ENCODE measurements at regions of chr3 and their contacts with region 1.

Region 1: DNA sequence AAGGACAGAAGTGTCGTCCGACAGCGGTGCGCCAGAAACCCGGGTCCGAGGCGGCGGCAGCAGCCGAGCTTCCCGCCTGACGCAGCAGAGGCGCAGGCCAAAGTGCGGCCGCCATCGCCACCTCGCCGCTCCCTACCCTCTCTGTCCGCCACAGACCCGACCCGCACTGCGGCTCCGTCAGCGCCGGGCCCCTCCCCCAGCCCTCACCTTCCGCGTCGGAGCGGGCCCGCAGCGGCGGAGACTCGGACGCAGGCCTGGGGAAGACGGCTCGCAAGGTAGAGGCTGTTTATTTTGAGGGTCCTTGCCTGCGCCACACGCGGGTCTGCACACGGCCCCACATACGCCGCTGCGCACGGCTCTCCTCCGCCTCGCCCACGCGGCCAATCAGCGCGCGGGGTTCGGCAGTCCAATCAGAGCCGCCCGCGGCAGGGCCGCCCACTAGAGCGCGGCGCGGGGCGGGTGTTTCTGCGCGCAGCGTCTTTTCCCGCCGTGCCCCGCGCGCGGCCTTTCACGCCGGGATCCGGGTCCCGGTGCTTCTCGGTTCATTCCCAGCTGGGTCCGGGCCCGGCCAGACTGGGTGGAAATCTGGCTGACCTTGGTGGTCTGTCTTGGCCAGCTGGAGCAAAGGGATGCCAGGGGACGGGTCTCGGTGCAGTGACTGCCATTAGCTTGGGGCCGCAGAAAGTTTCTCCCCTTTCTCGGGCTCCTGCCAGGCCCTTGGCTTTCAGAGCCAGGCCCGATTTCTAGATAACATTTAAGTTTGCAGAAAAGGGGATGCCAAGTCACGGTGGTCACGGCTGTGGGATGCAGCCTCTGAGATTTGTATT is at the start of gene CNBP:
- DNase-seq: peak; percentile 79 to 91 (median 85)
- H3K4me3 ChIP-seq: peak within 1 kb of the TSS; percentile 80 to 96 (median 94)
- H3K4me3 Mint-ChIP-seq: peak within 1 kb of the TSS; percentile 95 to 98
- H3K27ac ChIP-seq: peak within 1 kb of the TSS; percentile 90 to 93
- H3K27ac Mint-ChIP-seq: peak within 1 kb of the TSS; percentile 91 to 99 (median 94)
- H3K4me1 ChIP-seq: peaks cover 61 to 83% of the 10 kb centered on the region in 2 donors
- H3K4me1 Mint-ChIP-seq: peaks cover 57% of the 10 kb centered on the region
- H3K27me3 ChIP-seq: no peaks in the 10 kb centered on the region
- H3K27me3 Mint-ChIP-seq: no peaks in the 10 kb centered on the region
- CTCF ChIP-seq: no peak
- polyA plus RNA-seq, gene CNBP: 354 to 946 (median 845) TPM

Region 2: DNA sequence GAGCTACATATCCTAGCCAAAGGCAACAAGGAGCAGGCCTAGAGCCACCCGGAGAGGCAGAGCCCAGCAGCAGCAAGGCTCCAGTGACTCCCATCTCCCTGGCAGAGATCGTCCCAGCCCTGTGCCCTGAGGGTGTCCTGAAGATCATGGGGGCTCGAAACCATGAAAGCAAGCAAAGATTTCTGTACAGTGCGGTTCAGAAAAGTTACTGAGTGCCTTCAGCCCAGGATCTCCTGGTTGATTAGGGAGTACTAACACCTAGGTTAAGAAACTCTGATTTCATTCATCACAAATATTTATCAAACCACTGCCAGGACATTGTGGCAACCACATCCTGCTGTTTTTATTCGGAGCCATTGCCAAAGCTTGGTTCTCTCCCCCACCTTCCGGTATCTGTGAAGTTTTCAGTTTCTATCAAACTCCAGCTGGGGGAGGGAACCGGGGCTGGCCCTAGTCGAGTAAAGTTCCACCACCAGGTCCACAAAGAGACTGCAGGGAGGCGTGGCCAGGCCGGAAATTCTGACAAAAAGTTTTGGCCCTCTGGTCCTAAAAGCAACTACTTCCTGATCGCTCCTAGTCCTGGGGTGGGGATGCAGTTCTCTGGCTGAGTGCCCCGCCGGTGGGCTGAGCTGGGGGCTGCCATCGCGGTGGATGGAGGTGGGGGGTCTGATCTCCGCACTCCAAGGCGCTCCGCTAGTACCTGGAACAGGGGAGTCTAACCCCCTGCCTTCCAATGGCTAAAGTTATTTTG is 63.4 kb before region 1 on chr3:
- intact Hi-C with region 1: no loop called
- DNase-seq: peak; percentile 89 to 94 (median 92)
- H3K4me3 ChIP-seq: peak overlapping the region; percentile 83 to 96 (median 94)
- H3K4me3 Mint-ChIP-seq: peak overlapping the region; percentile 87 to 90
- H3K27ac ChIP-seq: peak overlapping the region; percentile 92 to 95
- H3K27ac Mint-ChIP-seq: peak overlapping the region; percentile 84 to 96 (median 92)
- H3K4me1 ChIP-seq: peaks cover 36 to 48% of the 10 kb centered on the region in 2 donors
- H3K4me1 Mint-ChIP-seq: peaks cover 54% of the 10 kb centered on the region
- H3K27me3 ChIP-seq: no peaks in the 10 kb centered on the region
- H3K27me3 Mint-ChIP-seq: peaks cover 3 to 9% (median 4%) of the 10 kb centered on the region in 3 donors
- CTCF ChIP-seq: no peak

Region 3: GRCh38 chr3:129161860-129162531 is 21.8 kb before region 1 on chr3:
- intact Hi-C with region 1: loop called in 1 of 2 experiments (anchors 2 kb)
- DNase-seq: peak in 2 of 3 donors; percentile 12 to 42
- H3K4me3 ChIP-seq: peak overlapping the region; percentile 78 to 88 (median 86)
- H3K4me3 Mint-ChIP-seq: peak overlapping the region; percentile 85 to 98
- H3K27ac ChIP-seq: peak overlapping the region; percentile 96 to 98
- H3K27ac Mint-ChIP-seq: peak overlapping the region; percentile 98 to 100 (median 100)
- H3K4me1 ChIP-seq: peaks cover 30 to 33% of the 10 kb centered on the region in 2 donors
- H3K4me1 Mint-ChIP-seq: peaks cover 30% of the 10 kb centered on the region
- H3K27me3 ChIP-seq: no peaks in the 10 kb centered on the region
- H3K27me3 Mint-ChIP-seq: peaks cover 0 to 2% (median 0%) of the 10 kb centered on the region in 3 donors
- CTCF ChIP-seq: peak; percentile 57

Region 4: GRCh38 chr3:129195731-129196256 is 12.0 kb after region 1 on chr3:
- intact Hi-C with region 1: no loop called
- DNase-seq: peak; percentile 75 to 83 (median 76)
- H3K4me3 ChIP-seq: peak overlapping the region; percentile 15 to 57 (median 30)
- H3K4me3 Mint-ChIP-seq: peak overlapping the region; percentile 54 to 84
- H3K27ac ChIP-seq: peak overlapping the region; percentile 66 to 85
- H3K27ac Mint-ChIP-seq: peak overlapping the region; percentile 88 to 97 (median 96)
- H3K4me1 ChIP-seq: peaks cover 36 to 46% of the 10 kb centered on the region in 2 donors
- H3K4me1 Mint-ChIP-seq: peaks cover 45% of the 10 kb centered on the region
- H3K27me3 ChIP-seq: no peaks in the 10 kb centered on the region
- H3K27me3 Mint-ChIP-seq: peaks cover 0 to 6% (median 0%) of the 10 kb centered on the region in 3 donors
- CTCF ChIP-seq: no peak

Region 5: GRCh38 chr3:129238945-129239706 is 55.3 kb after region 1 on chr3:
- intact Hi-C with region 1: loop called in 1 of 2 experiments (anchors 2 kb)
- DNase-seq: peak; percentile 90 to 95 (median 92)
- H3K4me3 ChIP-seq: peak overlapping the region in 1 of 3 experiments; percentile 27
- H3K4me3 Mint-ChIP-seq: peak overlapping the region; percentile 16 to 74
- H3K27ac ChIP-seq: peak overlapping the region; percentile 95 to 99
- H3K27ac Mint-ChIP-seq: peak overlapping the region; percentile 98 to 100 (median 99)
- H3K4me1 ChIP-seq: peaks cover 60 to 67% of the 10 kb centered on the region in 2 donors
- H3K4me1 Mint-ChIP-seq: peaks cover 54% of the 10 kb centered on the region
- H3K27me3 ChIP-seq: no peaks in the 10 kb centered on the region
- H3K27me3 Mint-ChIP-seq: peaks cover 0 to under 1% (median 0%) of the 10 kb centered on the region in 3 donors
- CTCF ChIP-seq: peak; percentile 34

Region 6: GRCh38 chr3:129249276-129250065 is 65.7 kb after region 1 on chr3 and contains the start of gene COPG1:
- intact Hi-C with region 1: loop called in 1 of 2 experiments (anchors 5 kb)
- DNase-seq: peak; percentile 84 to 96 (median 90)
- H3K4me3 ChIP-seq: peak within 1 kb of the TSS; percentile 70 to 94 (median 94)
- H3K4me3 Mint-ChIP-seq: peak within 1 kb of the TSS; percentile 92 to 95
- H3K27ac ChIP-seq: peak within 1 kb of the TSS; percentile 74 to 97
- H3K27ac Mint-ChIP-seq: peak within 1 kb of the TSS; percentile 93 to 99 (median 97)
- H3K4me1 ChIP-seq: peaks cover 27 to 36% of the 10 kb centered on the region in 2 donors
- H3K4me1 Mint-ChIP-seq: peaks cover 31% of the 10 kb centered on the region
- H3K27me3 ChIP-seq: no peaks in the 10 kb centered on the region
- H3K27me3 Mint-ChIP-seq: peaks cover 0 to 5% (median 3%) of the 10 kb centered on the region in 3 donors
- CTCF ChIP-seq: no peak
- polyA plus RNA-seq, gene COPG1: 59.9 to 94.5 (median 60.2) TPM

Region 7: DNA sequence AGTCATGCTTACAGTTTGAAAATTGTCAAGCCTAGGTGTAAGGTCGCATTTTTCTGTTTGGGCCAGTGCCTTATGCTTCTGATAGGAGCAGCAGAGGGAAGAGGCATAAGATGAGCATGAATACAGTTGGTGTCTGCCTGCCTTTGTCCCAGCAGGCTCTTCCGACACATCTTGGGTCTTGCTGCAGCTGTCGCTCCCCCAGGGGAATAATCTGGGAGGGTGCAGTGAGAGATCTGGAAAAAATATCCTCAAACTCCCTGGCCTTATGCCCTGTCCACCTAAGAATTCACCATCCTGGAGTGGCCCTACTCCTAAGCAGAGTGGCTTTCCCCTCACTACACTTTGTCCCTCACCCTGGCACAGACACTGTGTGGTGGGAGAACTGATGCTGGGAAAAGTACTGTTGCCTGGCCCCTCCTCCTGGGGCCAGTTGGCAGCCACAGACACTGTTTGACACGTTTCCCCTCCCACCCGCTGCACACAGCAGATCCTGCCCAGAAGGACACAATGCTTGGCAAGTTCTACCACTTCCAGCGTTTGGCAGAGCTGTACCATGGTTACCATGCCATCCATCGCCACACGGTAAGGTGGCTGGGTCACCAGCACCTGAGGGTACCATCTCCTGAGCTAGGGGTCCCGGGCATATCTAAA is 323.5 kb after region 1 on chr3:
- intact Hi-C with region 1: no loop called
- DNase-seq: no peak
- H3K4me3 ChIP-seq: no peak overlapping the region
- H3K4me3 Mint-ChIP-seq: no peak overlapping the region
- H3K27ac ChIP-seq: no peak overlapping the region
- H3K27ac Mint-ChIP-seq: peak overlapping the region in 2 of 7 donors; percentile 37 to 50
- H3K4me1 ChIP-seq: peaks cover 4% of the 10 kb centered on the region in 2 donors
- H3K4me1 Mint-ChIP-seq: peaks cover 4% of the 10 kb centered on the region
- H3K27me3 ChIP-seq: no peaks in the 10 kb centered on the region
- H3K27me3 Mint-ChIP-seq: peaks cover 0 to 2% (median 0%) of the 10 kb centered on the region in 3 donors
- CTCF ChIP-seq: no peak

Region 8: DNA sequence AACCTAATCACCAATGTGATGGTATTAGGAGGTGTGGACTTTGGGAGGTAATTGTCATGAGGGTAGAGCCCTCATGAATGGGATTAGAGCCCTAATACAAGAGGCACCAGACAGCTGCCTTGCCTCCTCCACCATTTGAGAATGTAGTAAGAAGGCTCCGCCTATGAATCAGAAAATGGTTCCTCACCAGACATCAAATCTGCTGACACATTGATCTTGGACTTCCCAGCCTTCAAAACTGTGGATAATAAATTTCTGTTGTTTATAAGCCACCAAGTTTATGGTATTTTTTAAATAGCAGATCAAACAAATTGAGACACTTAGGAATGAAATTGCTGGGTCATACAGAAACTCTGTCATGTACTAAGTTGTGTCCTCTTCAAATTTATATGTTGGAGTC is 1104.9 kb after region 1 on chr3:
- intact Hi-C with region 1: no loop called
- DNase-seq: no peak
- H3K4me3 ChIP-seq: no peak overlapping the region
- H3K4me3 Mint-ChIP-seq: no peak overlapping the region
- H3K27ac ChIP-seq: no peak overlapping the region
- H3K27ac Mint-ChIP-seq: no peak overlapping the region
- H3K4me1 ChIP-seq: no peaks in the 10 kb centered on the region
- H3K4me1 Mint-ChIP-seq: no peaks in the 10 kb centered on the region
- H3K27me3 ChIP-seq: peaks cover 0 to 2% of the 10 kb centered on the region in 2 donors
- H3K27me3 Mint-ChIP-seq: peaks cover 3 to 7% (median 4%) of the 10 kb centered on the region in 3 donors
- CTCF ChIP-seq: no peak

Measured in CD14-positive monocyte (primary cell).